ENCODE measurements at regions of chr19 and their contacts with region 1.

Region 1: GRCh38 chr19:12400633-12401502 is at the start of gene ZNF799:
- DNase-seq: peak; percentile 83
- ATAC-seq: peak; percentile 89
- H3K4me3 Mint-ChIP-seq: peak within 1 kb of the TSS; percentile 92
- H3K27ac Mint-ChIP-seq: peak within 1 kb of the TSS; percentile 77
- H3K4me1 Mint-ChIP-seq: peaks cover 22% of the 10 kb centered on the region
- H3K27me3 Mint-ChIP-seq: no peaks in the 10 kb centered on the region
- CTCF ChIP-seq: no peak
- total RNA-seq, gene ZNF799: 6.8 and 6.9 TPM in 2 replicates

Region 2: DNA sequence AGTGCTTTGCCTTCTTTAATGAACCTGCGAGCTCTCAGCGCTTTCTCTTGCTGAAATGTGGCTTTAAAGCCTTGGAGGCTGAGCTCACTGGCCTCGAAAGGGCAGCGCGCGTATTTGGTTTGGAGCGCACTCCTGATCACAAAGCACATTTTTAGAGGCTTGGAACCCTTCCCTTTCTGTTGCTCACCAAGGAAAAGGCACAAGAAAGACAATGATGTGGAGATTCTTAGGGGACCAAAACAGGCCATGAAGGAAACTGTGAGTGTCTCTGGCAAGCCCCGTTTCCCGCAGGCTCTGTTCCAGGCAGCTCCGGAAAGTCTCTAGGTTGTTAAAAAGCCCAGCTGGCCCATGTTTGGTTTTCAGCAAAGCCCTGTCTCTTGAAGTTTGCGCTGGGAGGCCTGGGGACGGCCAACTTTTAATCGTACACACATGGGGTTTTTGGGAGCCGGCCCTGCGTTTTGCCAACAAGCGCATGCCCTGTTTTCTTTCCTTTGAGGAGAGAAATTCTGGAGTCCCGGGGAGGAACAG is 1235.9 kb before region 1 on chr19:
- CTCF ChIA-PET with region 1: no interaction called
- POLR2A ChIA-PET with region 1: no interaction called
- intact Hi-C with region 1: no loop called
- DNase-seq: no peak
- ATAC-seq: no peak
- H3K4me3 Mint-ChIP-seq: no peak overlapping the region
- H3K27ac Mint-ChIP-seq: no peak overlapping the region
- H3K4me1 Mint-ChIP-seq: no peaks in the 10 kb centered on the region
- H3K27me3 Mint-ChIP-seq: no peaks in the 10 kb centered on the region
- CTCF ChIP-seq: no peak

Region 3: GRCh38 chr19:12162882-12163806 is 237.7 kb before region 1 on chr19 and contains the start of gene ZNF136:
- CTCF ChIA-PET with region 1: no interaction called
- POLR2A ChIA-PET with region 1: interaction called, 8 read pairs
- intact Hi-C with region 1: loop called (anchors 1 kb)
- DNase-seq: peak; percentile 83
- ATAC-seq: peak; percentile 99
- H3K4me3 Mint-ChIP-seq: peak within 1 kb of the TSS; percentile 96
- H3K27ac Mint-ChIP-seq: peak within 1 kb of the TSS; percentile 97
- H3K4me1 Mint-ChIP-seq: peaks cover 44% of the 10 kb centered on the region
- H3K27me3 Mint-ChIP-seq: no peaks in the 10 kb centered on the region
- CTCF ChIP-seq: no peak
- total RNA-seq, gene ZNF136: 20.4 and 24.6 TPM in 2 replicates

Region 4: GRCh38 chr19:12365236-12366162 is 35.4 kb before region 1 on chr19 and contains the start of gene ZNF442:
- CTCF ChIA-PET with region 1: no interaction called
- POLR2A ChIA-PET with region 1: interaction called, 12 read pairs
- intact Hi-C with region 1: loop called (anchors 2 kb)
- DNase-seq: peak; percentile 68
- ATAC-seq: peak; percentile 97
- H3K4me3 Mint-ChIP-seq: peak within 1 kb of the TSS; percentile 96
- H3K27ac Mint-ChIP-seq: peak within 1 kb of the TSS; percentile 91
- H3K4me1 Mint-ChIP-seq: peaks cover 25% of the 10 kb centered on the region
- H3K27me3 Mint-ChIP-seq: no peaks in the 10 kb centered on the region
- CTCF ChIP-seq: no peak
- total RNA-seq, gene ZNF442: 6.9 and 8.7 TPM in 2 replicates

Region 5: GRCh38 chr19:12484371-12485051 is 83.6 kb after region 1 on chr19 and contains the start of gene ZNF709:
- CTCF ChIA-PET with region 1: no interaction called
- POLR2A ChIA-PET with region 1: no interaction called
- intact Hi-C with region 1: loop called (anchors 1 kb)
- DNase-seq: peak; percentile 90
- ATAC-seq: peak; percentile 98
- H3K4me3 Mint-ChIP-seq: peak within 1 kb of the TSS; percentile 96
- H3K27ac Mint-ChIP-seq: peak within 1 kb of the TSS; percentile 88
- H3K4me1 Mint-ChIP-seq: peaks cover 35% of the 10 kb centered on the region
- H3K27me3 Mint-ChIP-seq: no peaks in the 10 kb centered on the region
- CTCF ChIP-seq: no peak
- total RNA-seq, gene ZNF709: 4.8 and 6.4 TPM in 2 replicates

Region 6: DNA sequence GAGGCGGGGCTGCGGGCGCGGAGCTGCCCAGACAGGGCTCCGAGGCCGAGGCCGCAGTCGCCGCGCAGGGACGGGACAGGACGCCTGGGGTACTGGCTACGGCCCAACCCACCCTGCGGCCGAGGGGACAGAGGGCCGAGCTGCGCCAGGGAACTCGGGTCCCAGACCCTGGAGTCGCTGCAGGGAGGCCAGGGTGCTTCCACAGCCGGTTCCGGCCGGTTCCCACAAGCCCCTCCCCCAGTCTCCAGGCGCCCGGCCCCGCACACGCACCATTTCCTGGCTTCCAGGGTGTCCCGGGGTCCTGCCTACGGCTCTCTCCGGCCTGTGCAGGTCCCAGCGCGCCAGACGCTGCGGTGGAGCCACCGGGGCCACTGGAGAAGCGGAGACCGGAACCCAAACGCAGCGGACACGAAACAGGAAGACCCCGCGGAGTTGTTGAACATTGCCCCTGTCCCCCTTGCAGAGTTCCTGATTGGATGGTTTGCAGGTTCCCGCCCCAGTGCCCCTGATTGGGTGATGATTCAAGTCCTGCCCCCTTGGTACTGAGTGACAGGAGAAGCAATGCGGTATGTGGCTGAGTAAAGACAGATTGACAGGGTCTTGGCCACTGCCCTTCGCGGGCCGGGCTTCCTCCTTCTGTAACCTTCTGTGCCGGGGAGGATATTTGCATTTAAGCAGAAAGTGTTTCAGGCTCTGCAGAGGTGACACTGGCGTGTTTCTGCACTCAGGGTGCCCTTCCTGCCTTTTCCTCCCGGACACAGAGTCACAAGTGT is 150.4 kb after region 1 on chr19 and contains the start of gene ZNF564:
- CTCF ChIA-PET with region 1: no interaction called
- POLR2A ChIA-PET with region 1: no interaction called
- intact Hi-C with region 1: loop called (anchors 1 kb)
- DNase-seq: peak; percentile 81
- ATAC-seq: peak; percentile 98
- H3K4me3 Mint-ChIP-seq: peak within 1 kb of the TSS; percentile 98
- H3K27ac Mint-ChIP-seq: peak within 1 kb of the TSS; percentile 94
- H3K4me1 Mint-ChIP-seq: peaks cover 48% of the 10 kb centered on the region
- H3K27me3 Mint-ChIP-seq: no peaks in the 10 kb centered on the region
- CTCF ChIP-seq: no peak
- total RNA-seq, gene ZNF564: 23.0 and 26.6 TPM in 2 replicates

Region 7: DNA sequence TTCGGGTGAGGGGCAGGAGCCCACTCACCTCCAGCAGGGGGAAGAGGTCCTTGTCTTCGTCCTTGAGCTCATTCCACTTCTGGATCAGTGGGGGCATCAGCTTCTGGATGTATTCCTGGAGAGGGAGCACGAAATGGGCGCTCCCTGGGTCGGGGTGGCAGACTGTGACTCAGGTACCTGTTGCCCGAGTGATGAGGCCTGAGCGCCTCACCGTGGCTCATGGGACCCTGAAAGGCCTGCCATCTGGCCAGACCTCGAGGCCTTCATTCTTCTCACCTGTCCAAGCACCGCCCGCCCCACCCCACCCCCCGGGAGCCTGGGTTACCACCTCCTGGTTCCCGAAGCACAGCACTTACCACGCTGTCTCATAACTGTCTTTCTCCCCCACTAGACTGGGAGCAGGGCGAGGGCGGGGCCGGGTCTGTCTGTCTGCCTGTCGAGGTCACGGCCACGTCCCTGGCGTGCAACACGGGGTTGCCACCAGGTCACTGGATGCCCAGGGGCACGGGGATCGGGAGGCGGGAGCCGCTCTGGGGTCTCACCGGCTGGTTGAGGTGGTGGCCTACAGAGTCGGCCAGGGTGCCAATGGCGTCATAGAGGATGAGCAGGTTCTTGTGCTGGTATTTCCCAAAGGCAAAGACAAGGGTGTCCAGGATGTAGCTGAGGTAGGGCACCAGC is 304.9 kb after region 1 on chr19:
- CTCF ChIA-PET with region 1: no interaction called
- POLR2A ChIA-PET with region 1: no interaction called
- intact Hi-C with region 1: no loop called
- DNase-seq: no peak
- ATAC-seq: no peak
- H3K4me3 Mint-ChIP-seq: no peak overlapping the region
- H3K27ac Mint-ChIP-seq: no peak overlapping the region
- H3K4me1 Mint-ChIP-seq: no peaks in the 10 kb centered on the region
- H3K27me3 Mint-ChIP-seq: no peaks in the 10 kb centered on the region
- CTCF ChIP-seq: no peak